Activated CD4-positive, alpha-beta memory T cell treated with anti-CD3 and anti-CD28 coated beads for 36 hours (primary cell): ENCODE measurements at regions of chr5 and their contacts with region 1.

Region 1: GRCh38 chr5:56026863-56027300 is 32.1 kb upstream of the IL6ST start:
- DNase-seq: peak; percentile 11
- H3K4me3 Mint-ChIP-seq: no peak overlapping the region
- H3K27ac Mint-ChIP-seq: no peak overlapping the region
- H3K4me1 Mint-ChIP-seq: peaks cover 4% of the 10 kb centered on the region
- H3K27me3 Mint-ChIP-seq: no peaks in the 10 kb centered on the region

Region 2: GRCh38 chr5:56012281-56012963 is 14.5 kb before region 1 on chr5:
- CTCF ChIA-PET with region 1: interaction called, 4 read pairs
- POLR2A ChIA-PET with region 1: interaction called, 16 read pairs
- intact Hi-C with region 1: loop called (anchors 1 kb)
- DNase-seq: peak; percentile 61
- H3K4me3 Mint-ChIP-seq: peak overlapping the region; percentile 31
- H3K27ac Mint-ChIP-seq: peak overlapping the region; percentile 81
- H3K4me1 Mint-ChIP-seq: peaks cover 30% of the 10 kb centered on the region
- H3K27me3 Mint-ChIP-seq: no peaks in the 10 kb centered on the region

Region 3: GRCh38 chr5:56045469-56045868 is 18.6 kb after region 1 on chr5:
- CTCF ChIA-PET with region 1: no interaction called
- POLR2A ChIA-PET with region 1: no interaction called
- intact Hi-C with region 1: loop called (anchors 1 kb)
- DNase-seq: no peak
- H3K4me3 Mint-ChIP-seq: no peak overlapping the region
- H3K27ac Mint-ChIP-seq: no peak overlapping the region
- H3K4me1 Mint-ChIP-seq: peaks cover 29% of the 10 kb centered on the region
- H3K27me3 Mint-ChIP-seq: no peaks in the 10 kb centered on the region